ENCODE measurements at regions of chr4 and their contacts with region 1.

Region 1: GRCh38 chr4:153750197-153750817 is 9.5 kb downstream of the RNF175 start:
- DNase-seq: peak; percentile 37 to 78 (median 64)
- ATAC-seq: peak; percentile 82
- H3K4me3 ChIP-seq: no peak overlapping the region
- H3K4me3 Mint-ChIP-seq: no peak overlapping the region
- H3K27ac ChIP-seq: no peak overlapping the region
- H3K27ac Mint-ChIP-seq: peak overlapping the region in 2 of 9 donors; percentile 26 to 45
- H3K4me1 ChIP-seq: peaks cover 0 to 12% of the 10 kb centered on the region in 2 donors
- H3K4me1 Mint-ChIP-seq: peaks cover 4 to 31% (median 17%) of the 10 kb centered on the region in 7 donors
- H3K27me3 ChIP-seq: no peaks in the 10 kb centered on the region
- H3K27me3 Mint-ChIP-seq: peaks cover 0 to 32% (median 0%) of the 10 kb centered on the region in 5 donors

Region 2: DNA sequence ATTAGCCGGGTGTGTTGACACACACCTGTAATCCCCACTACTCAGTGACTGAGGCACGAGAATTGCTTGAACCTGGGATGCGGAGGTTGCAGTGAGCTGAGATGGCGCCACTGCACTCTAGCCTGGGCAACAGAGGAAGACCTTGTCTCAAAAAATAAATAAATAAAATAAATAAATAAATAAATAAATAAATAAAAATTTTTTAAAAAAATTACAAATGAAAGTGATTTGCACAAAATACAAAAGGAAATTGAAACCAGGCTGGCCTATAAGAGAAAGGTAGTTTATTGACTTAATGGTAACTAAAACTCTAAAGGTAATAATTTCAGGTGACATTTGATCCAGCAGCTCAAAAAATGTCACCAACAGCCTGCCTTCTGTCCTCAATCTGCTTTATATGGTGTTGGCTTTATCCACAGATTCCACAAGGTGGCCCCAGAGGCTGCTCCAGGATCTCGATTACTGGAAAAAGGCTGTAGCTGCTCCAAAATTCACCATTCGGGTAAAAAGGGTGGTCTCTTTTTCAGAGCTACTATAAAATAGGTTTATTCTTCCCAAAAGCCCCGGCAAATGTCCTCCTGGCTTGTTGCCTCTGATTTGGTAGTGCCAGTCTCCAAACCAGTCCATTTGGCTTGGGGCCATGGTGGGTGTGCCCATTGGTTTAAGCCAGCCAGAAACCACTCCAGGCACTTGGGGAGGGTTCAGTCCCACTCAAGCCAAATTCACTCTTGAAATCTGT is 607.4 kb before region 1 on chr4:
- CTCF ChIA-PET with region 1: interaction called, 5 read pairs
- POLR2A ChIA-PET with region 1: no interaction called
- intact Hi-C with region 1: loop called (anchors 1 kb)
- DNase-seq: peak in 8 of 9 donors; percentile 39 to 71 (median 58)
- ATAC-seq: peak; percentile 76
- H3K4me3 ChIP-seq: no peak overlapping the region
- H3K4me3 Mint-ChIP-seq: no peak overlapping the region
- H3K27ac ChIP-seq: no peak overlapping the region
- H3K27ac Mint-ChIP-seq: no peak overlapping the region
- H3K4me1 ChIP-seq: no peaks in the 10 kb centered on the region
- H3K4me1 Mint-ChIP-seq: peaks cover 0 to 4% (median 0%) of the 10 kb centered on the region in 7 donors
- H3K27me3 ChIP-seq: no peaks in the 10 kb centered on the region
- H3K27me3 Mint-ChIP-seq: peaks cover 0 to 14% (median 0%) of the 10 kb centered on the region in 5 donors

Region 3: GRCh38 chr4:153426207-153426885 is 324.0 kb before region 1 on chr4:
- CTCF ChIA-PET with region 1: interaction called, 4 read pairs
- POLR2A ChIA-PET with region 1: interaction called, 3 read pairs
- intact Hi-C with region 1: loop called in 1 of 2 experiments (anchors 5 kb)
- DNase-seq: peak in 7 of 9 donors; percentile 68 to 89 (median 82)
- ATAC-seq: peak; percentile 88
- H3K4me3 ChIP-seq: peak overlapping the region; percentile 5
- H3K4me3 Mint-ChIP-seq: peak overlapping the region in 9 of 10 donors; percentile 47 to 80 (median 76)
- H3K27ac ChIP-seq: peak overlapping the region; percentile 79
- H3K27ac Mint-ChIP-seq: peak overlapping the region; percentile 88 to 98 (median 96)
- H3K4me1 ChIP-seq: peaks cover 18 to 57% of the 10 kb centered on the region in 2 donors
- H3K4me1 Mint-ChIP-seq: peaks cover 22 to 69% (median 62%) of the 10 kb centered on the region in 7 donors
- H3K27me3 ChIP-seq: no peaks in the 10 kb centered on the region
- H3K27me3 Mint-ChIP-seq: no peaks in the 10 kb centered on the region

Region 4: DNA sequence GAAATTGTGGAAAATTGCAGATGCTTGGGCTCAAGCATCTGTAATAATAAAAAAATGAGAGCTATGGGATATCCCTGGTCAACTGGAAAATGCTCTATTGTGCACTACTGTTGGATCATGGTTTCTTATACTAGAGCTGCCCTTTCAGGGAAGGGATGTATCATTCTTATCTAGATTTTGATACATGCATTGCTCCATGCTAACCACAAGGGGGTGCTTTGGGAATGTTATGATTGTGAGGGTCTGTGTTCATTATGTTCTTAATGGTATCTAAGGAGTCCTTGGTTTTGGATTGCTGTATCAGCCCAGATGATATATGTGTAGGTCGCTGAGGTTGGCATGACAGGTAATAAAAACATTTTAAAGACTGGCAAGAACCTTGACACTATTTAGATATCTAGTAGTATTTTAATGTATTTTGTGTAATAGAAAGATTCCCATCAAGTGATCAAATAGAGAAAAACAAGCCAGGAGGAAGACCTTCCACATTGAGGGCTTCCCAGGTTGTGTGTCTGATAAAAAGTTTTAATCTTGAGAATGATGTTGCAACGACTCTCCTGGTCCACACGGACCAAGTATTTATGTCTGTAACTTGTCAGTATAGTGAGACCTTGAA is 115.5 kb before region 1 on chr4:
- CTCF ChIA-PET with region 1: interaction called, 28 read pairs
- POLR2A ChIA-PET with region 1: no interaction called
- intact Hi-C with region 1: loop called (anchors 1 kb)
- DNase-seq: peak in 4 of 9 donors; percentile 22 to 37 (median 30)
- ATAC-seq: peak; percentile 79
- H3K4me3 ChIP-seq: no peak overlapping the region
- H3K4me3 Mint-ChIP-seq: no peak overlapping the region
- H3K27ac ChIP-seq: no peak overlapping the region
- H3K27ac Mint-ChIP-seq: peak overlapping the region in 6 of 9 donors; percentile 2 to 67 (median 44)
- H3K4me1 ChIP-seq: no peaks in the 10 kb centered on the region
- H3K4me1 Mint-ChIP-seq: peaks cover 0 to 6% (median 0%) of the 10 kb centered on the region in 7 donors
- H3K27me3 ChIP-seq: no peaks in the 10 kb centered on the region
- H3K27me3 Mint-ChIP-seq: no peaks in the 10 kb centered on the region

Region 5: DNA sequence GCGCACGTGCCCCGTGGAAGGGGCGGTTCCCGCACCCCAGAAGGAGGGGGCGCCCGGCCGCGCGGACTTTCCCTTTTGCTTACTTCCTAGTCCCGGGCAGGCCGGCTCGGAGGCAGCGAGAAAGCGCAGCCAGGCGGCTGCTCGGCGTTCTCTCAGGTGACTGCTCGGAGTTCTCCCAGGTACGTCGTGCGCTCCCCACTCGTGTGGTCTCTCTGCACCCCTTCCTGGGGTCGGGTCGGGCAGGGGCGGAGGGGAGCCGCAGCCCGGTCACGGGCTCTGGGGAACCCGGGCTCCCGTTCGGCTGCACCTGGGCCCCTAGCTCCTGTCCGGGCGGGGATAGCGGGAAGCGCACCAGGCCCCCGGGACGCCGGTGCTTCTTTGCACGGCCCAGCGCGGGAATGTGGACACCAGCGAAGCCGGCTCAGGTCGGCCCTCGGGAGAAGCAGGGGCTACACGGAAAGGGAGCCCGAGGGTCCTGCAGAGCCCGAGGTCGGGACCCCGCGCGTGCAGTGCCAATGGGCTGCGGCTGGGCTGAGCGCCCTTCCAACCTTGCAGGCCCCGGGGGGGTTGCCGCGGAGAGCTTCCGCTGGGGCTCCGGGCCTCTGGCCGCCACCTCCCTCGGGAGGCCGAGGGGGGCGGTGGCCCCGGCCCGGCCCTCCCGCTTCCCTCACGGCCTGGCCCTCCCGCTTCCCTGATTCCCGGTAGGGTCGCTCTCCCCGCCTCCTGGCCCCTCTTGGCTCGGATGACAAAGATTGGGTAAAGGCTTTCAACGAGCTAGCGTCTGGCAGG is 65.9 kb before region 1 on chr4 and contains the start of gene TLR2:
- CTCF ChIA-PET with region 1: no interaction called
- POLR2A ChIA-PET with region 1: interaction called, 3 read pairs
- intact Hi-C with region 1: loop called in 1 of 2 experiments (anchors 1 kb)
- DNase-seq: peak; percentile 43 to 71 (median 55)
- ATAC-seq: peak; percentile 94
- H3K4me3 ChIP-seq: peak within 1 kb of the TSS; percentile 69
- H3K4me3 Mint-ChIP-seq: peak within 1 kb of the TSS; percentile 82 to 97 (median 90)
- H3K27ac ChIP-seq: peak within 1 kb of the TSS; percentile 54
- H3K27ac Mint-ChIP-seq: peak within 1 kb of the TSS; percentile 1 to 83 (median 76)
- H3K4me1 ChIP-seq: no peaks in the 10 kb centered on the region
- H3K4me1 Mint-ChIP-seq: peaks cover 9 to 22% (median 18%) of the 10 kb centered on the region in 7 donors
- H3K27me3 ChIP-seq: no peaks in the 10 kb centered on the region
- H3K27me3 Mint-ChIP-seq: peaks cover 0 to 43% (median 13%) of the 10 kb centered on the region in 5 donors
- total RNA-seq, gene TLR2: 3.3 to 84.2 (median 6.6) TPM

Region 6: GRCh38 chr4:154049457-154050181 is 299.3 kb after region 1 on chr4:
- CTCF ChIA-PET with region 1: no interaction called
- POLR2A ChIA-PET with region 1: no interaction called
- intact Hi-C with region 1: no loop called
- DNase-seq: no peak
- ATAC-seq: no peak
- H3K4me3 ChIP-seq: no peak overlapping the region
- H3K4me3 Mint-ChIP-seq: no peak overlapping the region
- H3K27ac ChIP-seq: no peak overlapping the region
- H3K27ac Mint-ChIP-seq: no peak overlapping the region
- H3K4me1 ChIP-seq: no peaks in the 10 kb centered on the region
- H3K4me1 Mint-ChIP-seq: no peaks in the 10 kb centered on the region
- H3K27me3 ChIP-seq: no peaks in the 10 kb centered on the region
- H3K27me3 Mint-ChIP-seq: peaks cover 0 to 10% (median 6%) of the 10 kb centered on the region in 5 donors

Region 7: DNA sequence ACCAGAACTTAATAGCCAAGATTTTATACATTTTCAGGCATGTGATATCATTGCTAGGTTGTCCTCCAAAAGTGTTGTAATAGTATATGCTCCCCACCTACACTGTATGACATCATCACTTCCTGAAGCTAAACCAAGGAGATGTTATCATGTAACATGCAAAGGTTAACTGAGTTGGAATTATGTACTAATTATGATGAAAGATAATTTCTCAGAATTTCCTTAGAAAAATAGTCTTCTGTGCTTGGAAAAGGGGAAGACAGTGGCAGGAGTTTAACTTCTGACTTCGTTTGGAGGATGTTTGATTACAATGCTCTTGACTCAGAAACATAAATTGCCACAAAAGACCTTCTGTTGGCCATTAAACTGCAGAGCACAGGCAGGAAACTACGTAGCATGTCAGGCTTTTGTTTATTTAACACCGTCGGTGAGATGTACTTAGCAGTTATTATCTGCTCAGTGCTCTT is 1832.7 kb after region 1 on chr4:
- CTCF ChIA-PET with region 1: no interaction called
- POLR2A ChIA-PET with region 1: no interaction called
- intact Hi-C with region 1: no loop called
- DNase-seq: peak in 7 of 9 donors; percentile 4 to 46 (median 31)
- ATAC-seq: peak; percentile 56
- H3K4me3 ChIP-seq: no peak overlapping the region
- H3K4me3 Mint-ChIP-seq: peak overlapping the region in 7 of 10 donors; percentile 25 to 66 (median 47)
- H3K27ac ChIP-seq: no peak overlapping the region
- H3K27ac Mint-ChIP-seq: peak overlapping the region in 6 of 9 donors; percentile 20 to 49 (median 42)
- H3K4me1 ChIP-seq: no peaks in the 10 kb centered on the region
- H3K4me1 Mint-ChIP-seq: peaks cover 0 to 15% (median 11%) of the 10 kb centered on the region in 7 donors
- H3K27me3 ChIP-seq: no peaks in the 10 kb centered on the region
- H3K27me3 Mint-ChIP-seq: peaks cover 0 to 2% (median 0%) of the 10 kb centered on the region in 5 donors

Measured in naive thymus-derived CD4-positive, alpha-beta T cell (primary cell).